ENCODE measurements at regions of chr7 and their contacts with region 1.

Region 1: GRCh38 chr7:142313528-142313927 is 55.7 kb upstream of the PRSS58 start:
- DNase-seq: peak; percentile 56
- H3K4me3 Mint-ChIP-seq: no peak overlapping the region
- H3K27ac Mint-ChIP-seq: no peak overlapping the region
- H3K4me1 Mint-ChIP-seq: peaks cover 6% of the 10 kb centered on the region
- H3K27me3 Mint-ChIP-seq: peaks cover 5% of the 10 kb centered on the region

Region 2: GRCh38 chr7:141301544-141301943 is 1012.0 kb before region 1 on chr7:
- CTCF ChIA-PET with region 1: no interaction called
- POLR2A ChIA-PET with region 1: no interaction called
- intact Hi-C with region 1: no loop called
- DNase-seq: no peak
- H3K4me3 Mint-ChIP-seq: no peak overlapping the region
- H3K27ac Mint-ChIP-seq: no peak overlapping the region
- H3K4me1 Mint-ChIP-seq: no peaks in the 10 kb centered on the region
- H3K27me3 Mint-ChIP-seq: no peaks in the 10 kb centered on the region

Region 3: GRCh38 chr7:142301923-142302550 is 11.5 kb before region 1 on chr7:
- CTCF ChIA-PET with region 1: interaction called, 38 read pairs
- POLR2A ChIA-PET with region 1: no interaction called
- intact Hi-C with region 1: no loop called
- DNase-seq: no peak
- H3K4me3 Mint-ChIP-seq: no peak overlapping the region
- H3K27ac Mint-ChIP-seq: no peak overlapping the region
- H3K4me1 Mint-ChIP-seq: peaks cover 20% of the 10 kb centered on the region
- H3K27me3 Mint-ChIP-seq: peaks cover 10% of the 10 kb centered on the region

Region 4: DNA sequence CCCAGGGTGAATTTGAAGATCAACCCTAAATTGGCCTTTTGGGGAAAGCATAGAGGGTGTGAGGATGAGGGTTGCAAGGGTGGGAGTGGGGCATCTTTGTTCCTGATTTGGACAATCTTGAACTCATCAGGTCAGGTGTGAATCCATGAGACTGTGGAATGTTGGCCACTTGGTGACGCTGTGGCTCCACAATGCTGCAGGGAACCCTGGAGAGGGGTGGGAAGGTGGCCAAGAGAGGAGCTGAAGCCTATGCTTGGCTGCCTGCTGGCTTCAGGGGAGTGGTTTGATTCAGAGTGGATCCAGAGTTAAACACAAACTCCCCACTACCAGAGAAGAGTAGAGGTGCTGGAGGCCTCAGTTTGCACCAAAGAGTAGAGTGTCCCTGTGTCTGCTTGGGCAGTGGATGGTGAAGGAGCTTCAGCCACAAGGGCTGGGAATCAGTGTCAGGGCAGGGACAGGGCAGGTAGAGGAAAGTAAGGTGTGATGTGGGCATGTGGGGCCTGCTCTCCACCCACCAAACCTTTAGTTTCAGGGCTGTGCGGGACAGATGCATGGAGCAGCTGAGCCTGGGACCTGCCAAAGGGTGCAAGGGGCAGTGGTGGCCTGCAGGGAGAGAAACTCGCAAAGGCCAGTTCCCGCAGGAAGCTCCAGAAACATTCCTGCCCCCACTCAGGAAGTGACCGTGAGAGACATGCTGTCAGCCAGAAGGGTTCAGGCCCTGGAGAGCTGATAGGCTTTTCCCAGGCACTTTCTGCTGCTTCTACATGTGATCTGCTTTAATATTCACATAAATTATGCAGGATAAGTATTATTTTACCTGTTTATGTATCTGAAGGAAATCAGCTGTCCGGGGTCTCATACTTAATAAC is 25.3 kb after region 1 on chr7:
- CTCF ChIA-PET with region 1: interaction called, 3 read pairs
- POLR2A ChIA-PET with region 1: no interaction called
- intact Hi-C with region 1: loop called (anchors 1 kb)
- DNase-seq: peak; percentile 56
- H3K4me3 Mint-ChIP-seq: no peak overlapping the region
- H3K27ac Mint-ChIP-seq: peak overlapping the region; percentile 23
- H3K4me1 Mint-ChIP-seq: peaks cover 18% of the 10 kb centered on the region
- H3K27me3 Mint-ChIP-seq: peaks cover 1% of the 10 kb centered on the region

Region 5: DNA sequence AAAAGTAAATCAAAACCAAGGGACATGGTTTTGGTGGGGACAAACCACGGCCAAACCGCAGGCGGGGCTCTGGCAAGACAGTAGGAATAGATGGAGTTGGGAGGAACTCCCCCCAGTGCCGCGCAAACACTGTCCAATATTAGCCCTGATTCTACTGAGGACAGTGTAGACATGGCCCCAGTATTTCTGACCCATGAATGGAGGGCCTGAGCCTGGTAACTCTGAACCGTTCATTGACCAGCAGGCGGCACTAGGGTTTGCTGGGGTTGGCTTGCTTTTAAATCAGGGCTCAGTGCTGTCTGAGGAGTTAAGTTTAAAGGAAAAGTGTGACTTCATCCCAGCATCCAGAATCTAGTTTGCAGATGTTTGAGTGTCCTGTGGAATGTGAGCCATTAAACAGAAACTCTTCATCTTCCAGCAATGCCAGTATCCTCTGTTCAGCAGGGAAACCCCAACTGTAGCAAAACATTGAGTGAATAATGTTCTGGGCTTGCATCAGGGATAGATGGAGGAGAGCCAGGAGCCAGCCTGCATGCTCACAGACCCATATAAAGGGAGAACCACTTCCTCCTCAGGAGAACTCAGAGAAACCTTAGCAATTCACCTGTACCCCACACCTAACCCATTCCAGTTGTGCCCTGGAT is 91.7 kb after region 1 on chr7:
- CTCF ChIA-PET with region 1: no interaction called
- POLR2A ChIA-PET with region 1: no interaction called
- intact Hi-C with region 1: no loop called
- DNase-seq: no peak
- H3K4me3 Mint-ChIP-seq: no peak overlapping the region
- H3K27ac Mint-ChIP-seq: no peak overlapping the region
- H3K4me1 Mint-ChIP-seq: no peaks in the 10 kb centered on the region
- H3K27me3 Mint-ChIP-seq: peaks cover 4% of the 10 kb centered on the region